ENCODE measurements at regions of chr15 and their contacts with region 1.

Region 1: GRCh38 chr15:33737687-33738601 is 230.4 kb upstream of the CHRM5 start:
- DNase-seq: peak; percentile 13
- H3K4me3 ChIP-seq: no peak overlapping the region
- H3K27ac ChIP-seq: no peak overlapping the region
- H3K4me1 ChIP-seq: no peaks in the 10 kb centered on the region
- H3K27me3 ChIP-seq: no peaks in the 10 kb centered on the region
- CTCF ChIP-seq: peak; percentile 73 to 85

Region 2: GRCh38 chr15:33700695-33701304 is 37.1 kb before region 1 on chr15:
- CTCF ChIA-PET with region 1: interaction called, 5 read pairs
- dilution Hi-C with region 1: no loop called
- in situ Hi-C with region 1: no loop called
- intact Hi-C with region 1: loop called (anchors 2 kb)
- DNase-seq: peak; percentile 62
- H3K4me3 ChIP-seq: no peak overlapping the region
- H3K27ac ChIP-seq: no peak overlapping the region
- H3K4me1 ChIP-seq: no peaks in the 10 kb centered on the region
- H3K27me3 ChIP-seq: no peaks in the 10 kb centered on the region
- CTCF ChIP-seq: peak; percentile 95 to 99

Region 3: DNA sequence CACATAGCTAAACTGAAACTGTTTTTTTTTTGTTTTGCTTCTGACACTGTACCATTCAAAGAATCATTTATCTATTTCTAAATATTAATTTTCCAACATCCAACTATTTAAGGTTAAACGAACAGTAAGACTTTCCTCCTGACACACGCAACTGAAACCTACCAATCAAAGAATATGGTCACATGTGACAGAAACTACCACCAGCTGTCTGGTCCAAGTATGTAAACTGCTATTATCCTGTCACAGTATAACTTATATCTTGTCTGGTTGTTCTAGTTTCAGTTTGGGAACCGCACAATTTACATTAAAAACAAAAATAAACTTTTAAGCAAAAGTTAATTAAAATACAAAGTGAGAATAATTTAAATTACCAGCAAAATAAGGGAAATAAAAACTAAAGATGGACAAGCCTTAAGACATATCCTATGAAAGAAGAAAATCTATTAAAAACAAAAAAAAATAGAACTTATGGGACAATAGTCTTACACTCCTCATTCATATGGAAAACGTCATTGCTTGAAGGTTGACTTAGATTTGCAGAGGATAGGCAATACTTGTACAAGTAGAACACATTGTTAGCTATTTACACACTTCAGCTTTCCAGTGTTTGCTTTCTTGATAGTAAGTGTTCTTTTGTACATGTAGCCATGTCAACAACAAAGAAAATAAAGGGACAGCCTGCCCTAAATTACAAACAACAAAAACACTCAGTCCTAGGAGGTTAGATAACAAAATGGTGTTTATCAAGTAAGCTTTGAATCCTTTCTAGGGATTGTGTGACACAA is 203.5 kb after region 1 on chr15:
- CTCF ChIA-PET with region 1: no interaction called
- dilution Hi-C with region 1: loop called (anchors 5 kb)
- in situ Hi-C with region 1: no loop called
- intact Hi-C with region 1: no loop called
- DNase-seq: no peak
- H3K4me3 ChIP-seq: no peak overlapping the region
- H3K27ac ChIP-seq: no peak overlapping the region
- H3K4me1 ChIP-seq: no peaks in the 10 kb centered on the region
- H3K27me3 ChIP-seq: no peaks in the 10 kb centered on the region
- CTCF ChIP-seq: no peak

Region 4: DNA sequence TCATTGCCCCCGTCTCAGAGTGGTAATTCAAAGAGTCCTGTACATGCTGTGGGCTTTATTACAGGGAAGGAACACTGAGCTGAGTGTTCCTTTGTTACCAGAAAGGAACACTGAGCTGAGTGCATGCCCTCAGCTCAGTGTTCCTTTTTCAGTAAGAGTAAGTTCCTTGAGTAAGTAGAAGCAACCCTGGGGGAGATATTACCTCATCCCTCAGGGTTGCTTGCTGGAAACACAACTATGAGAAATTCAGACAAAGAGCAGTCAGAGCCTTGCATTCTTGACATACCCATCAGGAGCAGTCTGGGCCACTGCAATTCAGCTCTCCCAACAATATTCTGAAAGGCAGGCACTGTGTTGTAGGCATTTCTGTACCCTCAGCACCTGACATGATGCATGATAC is 247.3 kb after region 1 on chr15:
- CTCF ChIA-PET with region 1: no interaction called
- dilution Hi-C with region 1: loop called (anchors 10 kb)
- in situ Hi-C with region 1: no loop called
- intact Hi-C with region 1: no loop called
- DNase-seq: peak; percentile 63
- H3K4me3 ChIP-seq: no peak overlapping the region
- H3K27ac ChIP-seq: no peak overlapping the region
- H3K4me1 ChIP-seq: peaks cover 2% of the 10 kb centered on the region
- H3K27me3 ChIP-seq: no peaks in the 10 kb centered on the region
- CTCF ChIP-seq: no peak

Measured in mammary epithelial cell (primary cell).